GM10248 (cell line): ENCODE measurements at regions of chr10 and their contacts with region 1.

Region 1: DNA sequence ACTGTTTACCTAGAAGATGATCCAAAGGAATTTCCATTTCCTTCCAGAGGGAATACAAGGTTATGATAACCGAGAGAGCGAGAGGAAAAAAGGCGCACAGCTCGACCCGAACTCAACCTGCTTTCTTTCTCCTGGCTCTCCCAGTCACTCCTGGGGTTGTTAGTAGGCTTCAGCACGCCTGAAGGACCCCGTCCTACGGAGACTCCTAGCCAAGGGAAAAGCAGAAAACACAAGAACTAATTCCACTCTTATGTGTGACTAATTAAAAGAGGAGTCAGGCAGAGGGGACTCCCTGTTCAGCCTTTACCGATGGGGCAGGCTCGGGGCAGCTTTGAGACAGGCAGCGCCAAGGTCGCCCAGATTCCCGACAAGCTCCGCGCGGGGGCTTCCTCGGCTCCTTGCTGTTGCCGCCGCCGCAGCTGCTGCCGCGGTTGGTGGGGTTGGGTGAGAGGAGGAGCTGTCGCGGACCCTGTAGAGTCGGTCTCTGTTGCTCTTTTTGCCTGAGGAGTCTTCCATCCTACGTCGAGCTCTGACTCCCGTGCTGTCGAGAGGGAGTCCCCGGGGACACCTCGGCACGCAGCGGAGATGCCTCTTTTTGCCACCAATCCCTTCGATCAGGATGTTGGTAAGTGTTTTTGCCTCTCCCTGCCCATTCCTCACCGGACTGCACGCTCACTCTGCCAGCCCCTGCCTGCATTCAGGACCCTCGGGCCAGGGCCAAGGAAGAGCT is at the start of gene STAM:
- DNase-seq: peak; percentile 89
- CTCF ChIP-seq: no peak

Region 2: GRCh38 chr10:17655567-17656146 is 11.7 kb after region 1 on chr10:
- CTCF ChIA-PET with region 1: interaction called, 18 read pairs
- POLR2A ChIA-PET with region 1: interaction called, 3 read pairs
- DNase-seq: peak; percentile 56
- CTCF ChIP-seq: no peak

Region 3: DNA sequence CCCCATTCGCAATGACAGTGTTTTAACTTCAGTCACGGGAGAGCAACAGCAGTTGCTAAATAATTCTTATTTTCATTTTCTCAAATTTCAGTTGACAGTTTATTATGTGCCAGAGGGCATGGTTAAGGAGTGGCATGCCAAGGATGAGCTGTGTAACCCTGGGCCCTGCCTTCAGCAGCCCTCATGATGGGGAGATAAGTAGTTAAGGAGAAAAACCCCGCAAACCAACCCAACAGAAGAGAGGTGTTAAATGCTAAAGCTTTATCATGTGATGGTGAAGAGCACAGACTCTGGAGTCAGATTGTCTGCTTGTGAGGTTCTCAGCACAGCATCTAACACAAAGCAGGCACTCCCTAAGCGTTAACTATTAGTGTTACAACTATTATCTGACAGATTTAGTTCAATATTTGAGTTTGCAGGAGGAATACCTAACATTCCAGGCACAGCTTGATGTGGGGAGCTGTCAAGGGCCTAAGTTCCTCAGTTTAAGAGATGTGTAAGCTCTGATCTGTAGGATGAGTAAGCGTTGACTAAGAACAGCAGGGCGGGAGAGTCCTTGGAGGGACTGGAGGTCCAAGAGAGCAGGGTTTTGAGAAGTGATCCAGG is 29.6 kb after region 1 on chr10:
- CTCF ChIA-PET with region 1: interaction called, 12 read pairs
- POLR2A ChIA-PET with region 1: interaction called, 4 read pairs
- DNase-seq: no peak
- CTCF ChIP-seq: no peak